ENCODE measurements at regions of chr3 and their contacts with region 1.

Region 1: GRCh38 chr3:132034486-132035464 is at the start of gene CPNE4:
- DNase-seq: peak; percentile 54 to 89 (median 82)
- H3K4me3 ChIP-seq: peak within 1 kb of the TSS; percentile 17 to 67 (median 52)
- H3K27ac ChIP-seq: peak within 1 kb of the TSS in 2 of 59 donors; percentile 9 to 10
- H3K27me3 ChIP-seq: peaks cover 0 to 59% (median 14%) of the 10 kb centered on the region in 45 donors
- CTCF ChIP-seq: peak; percentile 30 to 88 (median 77)
- total RNA-seq, gene CPNE4: 10.7 to 62.8 (median 38.4) TPM

Region 2: GRCh38 chr3:131033480-131034080 is 1001.2 kb before region 1 on chr3:
- intact Hi-C with region 1: loop called in 1 of 2 experiments (anchors 10 kb)
- DNase-seq: no peak
- H3K4me3 ChIP-seq: no peak overlapping the region
- H3K27ac ChIP-seq: no peak overlapping the region
- H3K27me3 ChIP-seq: no peaks in the 10 kb centered on the region
- CTCF ChIP-seq: peak; percentile 52 to 82 (median 70)

Region 3: DNA sequence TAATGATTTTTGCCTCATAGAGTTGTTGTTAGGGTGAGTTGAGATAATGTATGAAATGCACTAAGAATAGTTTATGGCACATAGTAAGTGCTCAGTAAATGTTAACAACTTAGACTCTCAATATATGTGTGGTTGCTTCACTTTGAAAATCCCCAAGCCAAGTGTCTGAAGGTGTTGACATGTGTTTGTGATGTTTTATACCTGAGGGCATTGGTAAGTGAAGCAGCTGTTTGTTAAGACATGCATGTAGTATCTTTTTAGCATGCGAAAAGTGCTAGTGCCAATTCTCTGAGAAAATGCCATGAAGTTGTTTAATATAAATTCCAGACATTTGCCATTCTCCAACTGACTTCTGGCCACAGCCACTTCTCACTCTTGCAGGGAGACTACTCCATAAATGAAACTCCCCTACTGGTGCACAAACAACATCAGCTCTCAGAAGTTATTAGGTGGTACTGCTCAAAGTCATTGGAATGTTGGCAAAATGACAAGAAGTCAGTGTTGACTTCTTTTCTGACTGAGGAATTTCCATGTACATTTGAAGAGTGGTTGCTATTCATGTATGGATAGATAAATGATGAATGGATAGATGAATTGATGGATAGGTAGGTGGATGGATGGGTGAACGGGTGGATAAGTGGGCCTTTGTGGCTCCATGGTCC is 756.8 kb before region 1 on chr3:
- intact Hi-C with region 1: no loop called
- DNase-seq: no peak
- H3K4me3 ChIP-seq: no peak overlapping the region
- H3K27ac ChIP-seq: no peak overlapping the region
- H3K27me3 ChIP-seq: no peaks in the 10 kb centered on the region
- CTCF ChIP-seq: no peak

Region 4: DNA sequence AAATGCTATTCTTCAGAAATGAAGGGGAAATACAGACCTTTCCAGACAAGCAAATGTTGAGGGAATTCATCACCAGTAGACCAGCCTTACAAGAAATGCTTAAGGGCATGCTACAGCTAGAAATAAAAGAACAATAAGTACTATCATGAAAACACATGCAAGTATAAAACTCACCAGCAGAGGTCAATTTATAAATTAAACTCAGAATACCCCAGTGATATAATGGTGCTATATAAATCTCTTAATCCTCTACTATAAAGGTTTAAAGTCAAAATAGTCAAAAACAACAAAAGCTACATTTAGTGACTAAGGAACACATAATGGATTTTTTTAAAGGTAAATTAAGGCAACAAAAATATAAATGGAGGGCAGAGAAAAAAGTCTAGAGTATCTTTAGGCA is 142.4 kb before region 1 on chr3:
- intact Hi-C with region 1: no loop called
- DNase-seq: no peak
- H3K4me3 ChIP-seq: no peak overlapping the region
- H3K27ac ChIP-seq: no peak overlapping the region
- H3K27me3 ChIP-seq: peaks cover 0 to 4% (median 0%) of the 10 kb centered on the region in 45 donors
- CTCF ChIP-seq: no peak

Region 5: DNA sequence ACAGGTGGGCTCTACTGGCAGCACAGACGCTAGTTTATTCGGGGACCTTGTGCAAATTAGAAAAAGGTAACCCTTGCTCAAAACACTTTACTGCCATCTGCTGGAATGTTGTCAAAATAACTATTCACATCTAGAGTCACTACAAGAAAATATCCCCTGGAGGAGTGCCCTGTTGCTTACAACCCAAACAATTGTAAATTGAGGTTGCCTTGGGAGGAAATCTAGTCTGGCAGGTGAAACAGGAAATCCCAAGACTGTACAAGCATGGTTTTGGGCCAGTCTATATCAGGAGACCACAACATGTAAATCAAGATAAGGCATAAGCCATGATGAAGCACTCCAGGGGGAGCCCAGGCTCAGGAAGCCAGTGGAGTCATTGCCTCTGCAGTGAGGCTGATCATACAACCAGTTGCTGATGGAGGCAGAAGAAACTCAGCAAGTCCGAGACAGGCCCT is 145.6 kb after region 1 on chr3:
- intact Hi-C with region 1: loop called in 1 of 2 experiments (anchors 5 kb)
- DNase-seq: peak in 2 of 10 donors; percentile 13 to 27
- H3K4me3 ChIP-seq: no peak overlapping the region
- H3K27ac ChIP-seq: no peak overlapping the region
- H3K27me3 ChIP-seq: no peaks in the 10 kb centered on the region
- CTCF ChIP-seq: peak; percentile 19 to 73 (median 54)

Region 6: DNA sequence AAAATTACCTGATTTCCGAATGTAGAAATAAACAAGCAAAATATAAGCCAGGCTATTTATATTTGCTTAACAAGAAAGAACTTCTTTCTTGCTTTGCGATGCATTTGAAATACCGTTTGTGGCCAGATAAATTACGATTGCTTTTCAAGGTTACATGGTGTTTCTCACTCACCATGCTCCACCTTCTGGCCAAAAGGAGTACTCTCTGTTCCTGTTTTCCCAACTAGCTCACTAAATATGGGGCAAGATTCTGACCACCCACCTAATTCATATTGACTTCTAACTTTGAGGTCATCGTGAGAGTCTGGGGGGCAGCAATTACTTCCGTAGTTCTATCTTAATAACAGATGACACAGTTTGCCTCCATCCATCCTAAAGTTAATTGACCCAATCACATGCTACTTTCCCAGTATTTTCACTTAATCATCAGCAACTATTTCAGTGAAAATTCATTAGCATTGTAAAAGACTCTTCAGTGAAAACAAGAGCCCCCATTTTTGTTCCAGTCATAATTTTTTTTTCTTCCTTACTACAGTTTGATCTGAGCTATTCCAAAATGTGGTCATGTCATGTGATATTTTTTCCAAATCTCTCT is 308.3 kb after region 1 on chr3:
- intact Hi-C with region 1: loop called in 1 of 2 experiments (anchors 10 kb)
- DNase-seq: peak in 2 of 10 donors; percentile 10 to 27
- H3K4me3 ChIP-seq: peak overlapping the region in 18 of 59 donors; percentile 1 to 43 (median 24)
- H3K27ac ChIP-seq: no peak overlapping the region
- H3K27me3 ChIP-seq: no peaks in the 10 kb centered on the region
- CTCF ChIP-seq: peak; percentile 58 to 90 (median 84)

Measured in dorsolateral prefrontal cortex (tissue), 120 donors.